HepG2 (cell line): ENCODE measurements at regions of chr10 and their contacts with region 1.

Region 1: GRCh38 chr10:68406815-68407548 is at the start of gene RUFY2:
- DNase-seq: peak; percentile 58
- ATAC-seq: peak; percentile 94
- H3K4me3 ChIP-seq: peak within 1 kb of the TSS; percentile 85 to 100 (median 98)
- H3K27ac ChIP-seq: peak within 1 kb of the TSS; percentile 90
- H3K4me1 ChIP-seq: peaks cover 24% of the 10 kb centered on the region
- H3K27me3 ChIP-seq: no peaks in the 10 kb centered on the region; a peak in 1 of 5 replicates
- CTCF ChIP-seq: peak; percentile 67; the same call in 1 of the 2 replicates
- EP300 ChIP-seq: no peak
- POLR2A ChIP-seq: peak; percentile 74 to 76; a peak in 3 of 4 replicates
- RAD21 ChIP-seq: peak; percentile 80
- total RNA-seq, gene RUFY2: 10.5 and 16.1 TPM in 2 replicates

Region 2: GRCh38 chr10:68184546-68184945 is 222.4 kb before region 1 on chr10:
- CTCF ChIA-PET with region 1: no interaction called
- POLR2A ChIA-PET with region 1: no interaction called
- in situ Hi-C with region 1: no loop called
- intact Hi-C with region 1: no loop called
- DNase-seq: no peak
- ATAC-seq: peak; percentile 74
- H3K4me3 ChIP-seq: peak overlapping the region in 1 of 3 experiments; percentile 60; a peak in 1 of 6 replicates
- H3K27ac ChIP-seq: no peak overlapping the region
- H3K4me1 ChIP-seq: peaks cover 9% of the 10 kb centered on the region
- H3K27me3 ChIP-seq: no peaks in the 10 kb centered on the region
- CTCF ChIP-seq: no peak
- EP300 ChIP-seq: no peak
- POLR2A ChIP-seq: no peak
- RAD21 ChIP-seq: no peak

Region 3: GRCh38 chr10:68202960-68203353 is 204.0 kb before region 1 on chr10:
- CTCF ChIA-PET with region 1: no interaction called
- POLR2A ChIA-PET with region 1: no interaction called
- in situ Hi-C with region 1: no loop called
- intact Hi-C with region 1: no loop called
- DNase-seq: no peak
- ATAC-seq: no peak
- H3K4me3 ChIP-seq: no peak overlapping the region
- H3K27ac ChIP-seq: no peak overlapping the region
- H3K4me1 ChIP-seq: 0 out of 2 replicates have a peak, but pooled peaks cover 5% of the 10 kb centered on the region
- H3K27me3 ChIP-seq: no peaks in the 10 kb centered on the region
- CTCF ChIP-seq: no peak
- EP300 ChIP-seq: no peak
- POLR2A ChIP-seq: no peak
- RAD21 ChIP-seq: no peak

Region 4: GRCh38 chr10:68318331-68319059 is 88.5 kb before region 1 on chr10:
- CTCF ChIA-PET with region 1: no interaction called
- POLR2A ChIA-PET with region 1: no interaction called
- in situ Hi-C with region 1: no loop called
- intact Hi-C with region 1: no loop called
- DNase-seq: peak; percentile 41
- ATAC-seq: peak; percentile 97
- H3K4me3 ChIP-seq: no peak overlapping the region
- H3K27ac ChIP-seq: peak overlapping the region; percentile 41
- H3K4me1 ChIP-seq: peaks cover 15% of the 10 kb centered on the region
- H3K27me3 ChIP-seq: no peaks in the 10 kb centered on the region
- CTCF ChIP-seq: no peak
- EP300 ChIP-seq: no peak
- POLR2A ChIP-seq: no peak
- RAD21 ChIP-seq: no peak

Region 5: GRCh38 chr10:68348265-68348741 is 58.7 kb before region 1 on chr10:
- CTCF ChIA-PET with region 1: no interaction called
- POLR2A ChIA-PET with region 1: no interaction called
- in situ Hi-C with region 1: no loop called
- intact Hi-C with region 1: loop called (anchors 10 kb)
- DNase-seq: peak; percentile 48
- ATAC-seq: peak; percentile 80
- H3K4me3 ChIP-seq: no peak overlapping the region
- H3K27ac ChIP-seq: no peak overlapping the region
- H3K4me1 ChIP-seq: no peaks in the 10 kb centered on the region
- H3K27me3 ChIP-seq: no peaks in the 10 kb centered on the region
- CTCF ChIP-seq: peak; percentile 77
- EP300 ChIP-seq: no peak
- POLR2A ChIP-seq: no peak
- RAD21 ChIP-seq: 0 out of 2 replicates have a peak, but pooled peaks have one; percentile 18

Region 6: DNA sequence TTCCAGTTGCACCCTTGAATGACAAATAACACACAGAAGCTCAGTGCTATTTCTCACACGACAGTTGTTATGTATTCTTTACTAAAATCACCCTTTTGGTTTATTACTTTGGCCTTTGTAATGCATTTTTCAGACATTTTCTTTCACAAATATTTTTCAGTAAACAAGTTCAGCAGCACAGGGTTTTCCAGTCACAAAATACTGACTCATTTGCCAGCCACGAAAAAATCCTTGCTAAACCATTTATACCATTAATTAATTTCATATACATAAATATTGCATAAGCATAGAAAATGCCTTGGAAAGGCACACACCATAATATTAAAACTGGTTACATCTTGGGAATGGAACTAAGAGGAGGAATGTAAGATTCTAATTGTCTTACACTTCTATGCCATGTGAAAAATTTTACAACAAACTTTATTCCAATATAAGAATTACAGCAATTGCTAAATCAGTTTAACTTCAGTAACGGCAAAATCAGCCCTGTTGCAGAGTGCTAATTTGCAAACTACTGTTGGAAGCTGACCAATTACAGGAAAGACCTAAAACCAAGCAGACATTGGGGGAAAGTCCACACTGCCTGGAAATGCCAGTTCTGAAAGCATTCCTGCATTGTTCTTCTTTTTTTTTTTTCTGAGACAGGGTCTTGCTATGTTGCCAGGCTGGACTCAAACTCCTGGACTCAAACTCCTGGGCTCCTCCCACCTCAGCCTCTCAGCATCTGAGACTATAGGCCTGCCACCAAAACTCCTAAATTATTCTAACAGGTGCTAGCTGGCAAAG is 42.7 kb before region 1 on chr10:
- CTCF ChIA-PET with region 1: no interaction called
- POLR2A ChIA-PET with region 1: no interaction called
- in situ Hi-C with region 1: no loop called
- intact Hi-C with region 1: no loop called
- DNase-seq: no peak
- ATAC-seq: no peak
- H3K4me3 ChIP-seq: no peak overlapping the region
- H3K27ac ChIP-seq: no peak overlapping the region
- H3K4me1 ChIP-seq: peaks cover 4% of the 10 kb centered on the region; the same call in 1 of the 2 replicates
- H3K27me3 ChIP-seq: no peaks in the 10 kb centered on the region
- CTCF ChIP-seq: no peak
- EP300 ChIP-seq: no peak
- POLR2A ChIP-seq: no peak
- RAD21 ChIP-seq: no peak

Region 7: GRCh38 chr10:68543004-68543918 is 136.3 kb after region 1 on chr10:
- CTCF ChIA-PET with region 1: no interaction called
- POLR2A ChIA-PET with region 1: no interaction called
- in situ Hi-C with region 1: no loop called
- intact Hi-C with region 1: loop called (anchors 10 kb)
- DNase-seq: peak; percentile 71
- ATAC-seq: peak; percentile 91
- H3K4me3 ChIP-seq: peak overlapping the region; percentile 1 to 44 (median 42); a peak in 4 of 6 replicates
- H3K27ac ChIP-seq: no peak overlapping the region
- H3K4me1 ChIP-seq: peaks cover 37% of the 10 kb centered on the region
- H3K27me3 ChIP-seq: no peaks in the 10 kb centered on the region
- CTCF ChIP-seq: no peak
- EP300 ChIP-seq: no peak
- POLR2A ChIP-seq: no peak
- RAD21 ChIP-seq: no peak